ENCODE measurements at regions of chr9 and their contacts with region 1.

Region 1: DNA sequence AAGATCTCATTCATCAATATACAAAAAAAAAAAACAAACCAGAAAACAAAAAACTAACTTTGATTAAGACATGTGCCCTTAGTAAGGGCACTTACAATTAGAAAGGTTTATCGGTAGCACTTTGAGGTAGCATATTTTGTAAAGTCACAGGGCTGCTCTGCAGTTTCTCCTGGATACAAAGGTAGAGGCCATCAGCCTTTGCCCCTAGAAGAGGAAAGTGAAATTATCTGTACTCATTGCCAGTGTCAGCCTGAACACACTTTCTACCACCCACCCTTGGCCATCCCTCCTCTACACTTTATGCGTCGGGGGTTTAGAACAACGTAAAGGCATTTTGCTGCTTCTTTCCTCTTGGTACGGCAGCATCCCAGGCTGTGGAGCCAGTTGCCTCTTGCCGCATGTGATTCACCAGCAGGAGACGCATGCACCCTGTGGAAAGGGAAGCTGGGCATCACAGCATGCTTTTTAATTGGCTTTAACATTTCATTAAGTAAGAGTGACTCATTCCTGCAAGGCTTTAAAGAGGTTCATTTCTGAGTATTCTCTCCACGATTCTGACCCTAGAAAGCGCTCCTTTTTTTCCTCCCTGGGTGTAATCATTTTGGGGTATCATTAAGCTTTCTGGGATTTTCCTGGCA is 84.6 kb downstream of the CEMIP2 start:
- DNase-seq: no peak
- H3K4me3 Mint-ChIP-seq: no peak overlapping the region
- H3K27ac Mint-ChIP-seq: peak overlapping the region; percentile 28
- H3K4me1 Mint-ChIP-seq: peaks cover 65% of the 10 kb centered on the region
- H3K27me3 Mint-ChIP-seq: no peaks in the 10 kb centered on the region
- CTCF ChIP-seq: no peak

Region 2: GRCh38 chr9:71725590-71726338 is 42.0 kb after region 1 on chr9:
- CTCF ChIA-PET with region 1: no interaction called
- intact Hi-C with region 1: no loop called
- DNase-seq: peak; percentile 40
- H3K4me3 Mint-ChIP-seq: no peak overlapping the region
- H3K27ac Mint-ChIP-seq: no peak overlapping the region
- H3K4me1 Mint-ChIP-seq: peaks cover 33% of the 10 kb centered on the region
- H3K27me3 Mint-ChIP-seq: no peaks in the 10 kb centered on the region
- CTCF ChIP-seq: no peak

Region 3: DNA sequence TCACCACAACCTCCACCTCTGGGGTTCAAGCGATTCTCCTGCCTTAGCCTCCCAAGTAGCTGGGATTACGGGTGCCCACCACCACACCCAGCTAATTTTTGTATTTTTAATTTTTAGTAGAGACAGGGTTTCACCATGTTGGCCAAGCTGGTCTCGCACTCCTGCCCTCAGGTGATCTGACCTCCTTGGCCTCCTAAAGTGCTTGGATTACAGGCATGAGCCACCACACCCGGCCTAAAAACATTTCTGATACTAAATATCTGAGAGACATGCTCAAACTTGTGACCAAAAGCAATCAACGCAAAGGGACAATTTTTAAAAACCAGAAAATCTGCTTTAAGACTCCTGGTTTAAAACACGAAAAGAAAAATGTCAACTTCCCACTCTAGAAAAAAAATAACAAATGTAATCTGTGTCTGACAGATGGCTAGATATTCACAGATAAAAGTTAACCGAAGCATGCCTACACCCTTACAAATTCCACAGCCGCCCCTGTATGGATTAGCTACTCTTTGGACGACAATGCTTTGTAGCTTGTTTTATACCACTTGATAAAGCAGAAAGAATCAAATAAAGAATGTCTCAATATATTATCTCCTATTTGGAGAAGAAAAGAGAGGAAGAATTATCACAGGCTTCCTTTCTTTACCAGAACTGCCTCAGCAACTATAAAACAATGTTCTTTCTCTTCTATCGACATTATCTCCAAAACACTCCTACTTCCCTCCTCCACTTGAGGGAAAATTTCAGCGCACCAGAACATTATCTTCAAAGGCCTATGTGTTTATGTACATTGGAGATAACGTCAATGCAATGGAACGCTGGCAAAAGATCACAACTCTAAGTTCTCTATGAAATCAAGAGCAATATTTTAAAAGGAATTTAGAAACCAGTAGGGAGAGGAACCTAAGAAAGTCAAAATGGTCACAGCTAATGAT is 58.3 kb after region 1 on chr9:
- CTCF ChIA-PET with region 1: interaction called, 10 read pairs
- intact Hi-C with region 1: no loop called
- DNase-seq: no peak
- H3K4me3 Mint-ChIP-seq: peak overlapping the region; percentile 59
- H3K27ac Mint-ChIP-seq: peak overlapping the region; percentile 82
- H3K4me1 Mint-ChIP-seq: peaks cover 45% of the 10 kb centered on the region
- H3K27me3 Mint-ChIP-seq: no peaks in the 10 kb centered on the region
- CTCF ChIP-seq: no peak

Region 4: GRCh38 chr9:71928832-71929604 is 245.3 kb after region 1 on chr9:
- CTCF ChIA-PET with region 1: no interaction called
- intact Hi-C with region 1: no loop called
- DNase-seq: peak; percentile 14
- H3K4me3 Mint-ChIP-seq: peak overlapping the region; percentile 12
- H3K27ac Mint-ChIP-seq: no peak overlapping the region
- H3K4me1 Mint-ChIP-seq: peaks cover 14% of the 10 kb centered on the region
- H3K27me3 Mint-ChIP-seq: no peaks in the 10 kb centered on the region
- CTCF ChIP-seq: no peak